Esophagus squamous epithelium (tissue), 5 donors: ENCODE measurements at regions of chr10 and their contacts with region 1.

Region 1: GRCh38 chr10:7410862-7411670 is at the start of gene SFMBT2:
- DNase-seq: no peak
- H3K4me3 ChIP-seq: peak within 1 kb of the TSS; percentile 53 to 72 (median 64)
- H3K27ac ChIP-seq: peak within 1 kb of the TSS; percentile 69 to 83 (median 74)
- H3K4me1 ChIP-seq: peaks cover 28 to 67% (median 37%) of the 10 kb centered on the region in 3 donors
- H3K27me3 ChIP-seq: peaks cover 8 to 87% (median 12%) of the 10 kb centered on the region in 4 donors
- CTCF ChIP-seq: no peak
- POLR2A ChIP-seq: peak in 1 of 4 donors; percentile 18
- total RNA-seq, gene SFMBT2: 0.72 to 5.0 (median 1.4) TPM

Region 2: GRCh38 chr10:6674291-6674690 is 736.8 kb before region 1 on chr10:
- intact Hi-C with region 1: loop called (anchors 5 kb)
- DNase-seq: no peak
- H3K4me3 ChIP-seq: no peak overlapping the region
- H3K27ac ChIP-seq: no peak overlapping the region
- H3K4me1 ChIP-seq: no peaks in the 10 kb centered on the region
- H3K27me3 ChIP-seq: peaks cover 0 to 8% (median 1%) of the 10 kb centered on the region in 4 donors
- CTCF ChIP-seq: no peak
- POLR2A ChIP-seq: no peak

Region 3: GRCh38 chr10:7260412-7260900 is 150.6 kb before region 1 on chr10:
- intact Hi-C with region 1: loop called (anchors 5 kb)
- DNase-seq: peak; percentile 3
- H3K4me3 ChIP-seq: no peak overlapping the region
- H3K27ac ChIP-seq: peak overlapping the region in 3 of 4 donors; percentile 40 to 72 (median 42)
- H3K4me1 ChIP-seq: peaks cover 9 to 48% (median 20%) of the 10 kb centered on the region in 3 donors
- H3K27me3 ChIP-seq: no peaks in the 10 kb centered on the region
- CTCF ChIP-seq: peak in 5 of 6 experiments; percentile 65 to 78 (median 74)
- POLR2A ChIP-seq: no peak

Region 4: GRCh38 chr10:7583626-7584025 is 172.6 kb after region 1 on chr10:
- intact Hi-C with region 1: no loop called
- DNase-seq: no peak
- H3K4me3 ChIP-seq: no peak overlapping the region
- H3K27ac ChIP-seq: no peak overlapping the region
- H3K4me1 ChIP-seq: no peaks in the 10 kb centered on the region
- H3K27me3 ChIP-seq: no peaks in the 10 kb centered on the region
- CTCF ChIP-seq: no peak
- POLR2A ChIP-seq: no peak